ENCODE measurements at regions of chr20 and their contacts with region 1.

Region 1: GRCh38 chr20:62808211-62808865 is 3.7 kb downstream of the OGFR start:
- DNase-seq: peak; percentile 76 to 84
- ATAC-seq: peak; percentile 60 to 70 (median 63)
- H3K4me3 ChIP-seq: no peak overlapping the region
- H3K4me3 Mint-ChIP-seq: peak overlapping the region; percentile 71
- H3K27ac ChIP-seq: no peak overlapping the region
- H3K27ac Mint-ChIP-seq: peak overlapping the region; percentile 45 to 65
- H3K4me1 ChIP-seq: peaks cover 43% of the 10 kb centered on the region
- H3K4me1 Mint-ChIP-seq: peaks cover 5 to 23% of the 10 kb centered on the region in 2 donors
- H3K27me3 ChIP-seq: no peaks in the 10 kb centered on the region
- H3K27me3 Mint-ChIP-seq: no peaks in the 10 kb centered on the region
- CTCF ChIP-seq: peak; percentile 94

Region 2: GRCh38 chr20:62500237-62500864 is 308.0 kb before region 1 on chr20:
- intact Hi-C with region 1: loop called (anchors 1 kb)
- DNase-seq: peak; percentile 75 to 88
- ATAC-seq: peak; percentile 79 to 82 (median 79)
- H3K4me3 ChIP-seq: no peak overlapping the region
- H3K4me3 Mint-ChIP-seq: no peak overlapping the region
- H3K27ac ChIP-seq: no peak overlapping the region
- H3K27ac Mint-ChIP-seq: peak overlapping the region in 1 of 2 donors; percentile 62
- H3K4me1 ChIP-seq: peaks cover 14% of the 10 kb centered on the region
- H3K4me1 Mint-ChIP-seq: peaks cover 0 to 12% of the 10 kb centered on the region in 2 donors
- H3K27me3 ChIP-seq: no peaks in the 10 kb centered on the region
- H3K27me3 Mint-ChIP-seq: no peaks in the 10 kb centered on the region
- CTCF ChIP-seq: peak; percentile 74

Region 3: GRCh38 chr20:62668441-62669027 is 139.8 kb before region 1 on chr20:
- intact Hi-C with region 1: loop called (anchors 1 kb)
- DNase-seq: peak; percentile 36 to 69
- ATAC-seq: peak; percentile 48 to 70 (median 61)
- H3K4me3 ChIP-seq: no peak overlapping the region
- H3K4me3 Mint-ChIP-seq: no peak overlapping the region
- H3K27ac ChIP-seq: no peak overlapping the region
- H3K27ac Mint-ChIP-seq: no peak overlapping the region
- H3K4me1 ChIP-seq: no peaks in the 10 kb centered on the region
- H3K4me1 Mint-ChIP-seq: no peaks in the 10 kb centered on the region
- H3K27me3 ChIP-seq: no peaks in the 10 kb centered on the region
- H3K27me3 Mint-ChIP-seq: no peaks in the 10 kb centered on the region
- CTCF ChIP-seq: peak; percentile 68

Region 4: GRCh38 chr20:62937366-62938104 is 129.2 kb after region 1 on chr20:
- intact Hi-C with region 1: loop called (anchors 10 kb)
- DNase-seq: peak; percentile 98
- ATAC-seq: peak; percentile 87 to 96 (median 91)
- H3K4me3 ChIP-seq: peak overlapping the region; percentile 75
- H3K4me3 Mint-ChIP-seq: peak overlapping the region; percentile 95
- H3K27ac ChIP-seq: peak overlapping the region; percentile 67
- H3K27ac Mint-ChIP-seq: peak overlapping the region; percentile 79 to 92
- H3K4me1 ChIP-seq: peaks cover 31% of the 10 kb centered on the region
- H3K4me1 Mint-ChIP-seq: peaks cover 36 to 39% of the 10 kb centered on the region in 2 donors
- H3K27me3 ChIP-seq: no peaks in the 10 kb centered on the region
- H3K27me3 Mint-ChIP-seq: no peaks in the 10 kb centered on the region
- CTCF ChIP-seq: no peak